ENCODE measurements at regions of chr12 and their contacts with region 1.

Region 1: GRCh38 chr12:6867413-6868210 is at the start of gene TPI1:
- DNase-seq: peak; percentile 46 to 82
- H3K4me3 ChIP-seq: peak within 1 kb of the TSS; percentile 97
- H3K27ac ChIP-seq: peak within 1 kb of the TSS; percentile 72
- H3K4me1 ChIP-seq: peaks cover 32% of the 10 kb centered on the region
- H3K27me3 ChIP-seq: no peaks in the 10 kb centered on the region
- CTCF ChIP-seq: no peak; the same call in 1 of the 2 replicates
- total RNA-seq, gene TPI1: 1,080 and 1,199 TPM in 2 replicates

Region 2: GRCh38 chr12:6890789-6891645 is 23.4 kb after region 1 on chr12:
- CTCF ChIA-PET with region 1: interaction called, 13 read pairs
- POLR2A ChIA-PET with region 1: interaction called, 20 read pairs
- intact Hi-C with region 1: no loop called
- DNase-seq: peak; percentile 89 to 100
- H3K4me3 ChIP-seq: peak overlapping the region; percentile 57
- H3K27ac ChIP-seq: peak overlapping the region; percentile 90
- H3K4me1 ChIP-seq: peaks cover 15% of the 10 kb centered on the region
- H3K27me3 ChIP-seq: no peaks in the 10 kb centered on the region
- CTCF ChIP-seq: peak; percentile 74

Region 3: GRCh38 chr12:6927379-6928024 is 59.9 kb after region 1 on chr12 and contains the start of gene ATN1:
- CTCF ChIA-PET with region 1: interaction called, 15 read pairs
- POLR2A ChIA-PET with region 1: interaction called, 14 read pairs
- intact Hi-C with region 1: loop called (anchors 2 kb)
- DNase-seq: peak in 1 of 2 experiments; percentile 66
- H3K4me3 ChIP-seq: peak within 1 kb of the TSS; percentile 85
- H3K27ac ChIP-seq: peak within 1 kb of the TSS; percentile 75
- H3K4me1 ChIP-seq: peaks cover 53% of the 10 kb centered on the region
- H3K27me3 ChIP-seq: no peaks in the 10 kb centered on the region
- CTCF ChIP-seq: no peak
- total RNA-seq, gene ATN1: 158 and 159 TPM in 2 replicates

Region 4: DNA sequence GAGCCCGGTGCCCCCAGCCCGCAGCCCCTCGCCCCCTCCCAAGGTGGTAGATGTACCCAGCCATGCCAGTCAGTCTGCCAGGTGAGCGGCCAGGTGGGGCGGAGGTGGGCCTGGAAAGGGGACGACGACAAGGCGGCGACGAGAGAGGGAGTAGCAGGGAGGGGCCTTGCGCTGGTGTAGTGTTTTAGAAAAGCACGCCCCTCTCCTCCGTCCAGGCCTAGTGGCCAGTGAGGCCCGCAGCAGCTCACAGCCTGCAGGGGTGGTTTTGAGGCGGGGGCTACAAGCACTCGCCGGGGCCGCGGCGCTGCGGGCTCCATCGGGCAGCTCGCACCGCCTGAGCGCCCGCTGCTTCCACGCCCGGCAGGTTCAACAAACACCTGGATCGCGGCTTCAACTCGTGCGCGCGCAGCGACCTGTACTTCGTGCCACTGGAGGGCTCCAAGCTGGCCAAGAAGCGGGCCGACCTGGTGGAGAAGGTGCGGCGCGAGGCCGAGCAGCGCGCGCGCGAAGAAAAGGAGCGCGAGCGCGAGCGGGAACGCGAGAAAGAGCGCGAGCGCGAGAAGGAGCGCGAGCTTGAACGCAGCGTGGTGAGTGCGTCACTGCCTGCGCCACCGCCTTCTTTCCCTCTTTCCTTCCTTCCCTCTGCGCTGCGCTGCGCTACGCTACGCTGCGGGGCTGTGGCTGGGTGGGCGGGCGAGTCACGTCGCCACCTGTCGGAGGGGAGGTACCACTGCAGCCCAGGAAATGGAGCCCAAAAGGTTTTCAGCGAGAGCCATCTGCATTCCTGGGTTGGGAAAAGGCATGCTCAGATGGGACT is 70.1 kb after region 1 on chr12:
- CTCF ChIA-PET with region 1: interaction called, 5 read pairs
- POLR2A ChIA-PET with region 1: interaction called, 6 read pairs
- intact Hi-C with region 1: loop called (anchors 1 kb)
- DNase-seq: peak; percentile 92 to 97
- H3K4me3 ChIP-seq: peak overlapping the region; percentile 62
- H3K27ac ChIP-seq: peak overlapping the region; percentile 52
- H3K4me1 ChIP-seq: peaks cover 8% of the 10 kb centered on the region
- H3K27me3 ChIP-seq: no peaks in the 10 kb centered on the region
- CTCF ChIP-seq: peak; percentile 98

Region 5: DNA sequence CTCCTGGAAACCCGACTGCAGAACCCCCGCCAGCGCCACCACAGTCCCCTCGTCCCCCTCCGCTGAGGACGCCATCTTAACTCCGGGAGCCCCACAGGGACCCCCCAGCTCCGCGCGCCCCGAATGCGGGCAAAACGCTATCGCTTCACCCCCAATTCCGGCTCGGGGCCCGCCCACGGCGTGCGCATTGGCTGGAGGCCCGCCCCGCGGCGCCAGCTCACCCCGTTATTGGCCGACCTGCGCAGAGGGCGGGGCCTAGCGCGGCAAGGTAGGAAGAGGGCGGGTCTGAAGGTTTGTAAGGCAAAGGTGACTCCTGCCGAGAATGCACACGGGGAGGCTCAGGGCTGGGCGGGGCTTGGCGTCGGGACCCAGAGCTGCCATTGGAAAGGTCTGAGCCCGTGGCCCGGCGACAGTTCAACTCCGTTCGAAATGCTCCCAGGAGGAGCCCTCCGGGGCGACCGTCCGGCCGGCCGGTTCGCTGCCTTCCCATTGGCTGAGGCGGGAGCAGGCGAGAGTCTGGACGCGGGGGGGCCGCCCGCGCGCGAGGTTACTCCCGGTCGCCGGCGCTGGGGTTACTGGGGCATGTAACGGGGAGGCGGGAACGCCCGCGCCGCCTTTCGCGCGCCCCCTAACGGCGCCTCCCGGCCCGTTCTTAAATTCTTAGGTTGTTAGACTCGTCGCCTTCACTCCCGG is 150.9 kb after region 1 on chr12 and contains the start of gene LPCAT3:
- CTCF ChIA-PET with region 1: no interaction called
- POLR2A ChIA-PET with region 1: interaction called, 4 read pairs
- intact Hi-C with region 1: loop called (anchors 2 kb)
- DNase-seq: peak; percentile 96 to 100
- H3K4me3 ChIP-seq: peak within 1 kb of the TSS; percentile 79
- H3K27ac ChIP-seq: peak within 1 kb of the TSS; percentile 74
- H3K4me1 ChIP-seq: peaks cover 37% of the 10 kb centered on the region
- H3K27me3 ChIP-seq: no peaks in the 10 kb centered on the region
- CTCF ChIP-seq: peak; percentile 83
- total RNA-seq, gene LPCAT3: 53.8 and 102 TPM in 2 replicates

Region 6: GRCh38 chr12:7108796-7109571 is 241.4 kb after region 1 on chr12 and contains the start of gene C1RL:
- CTCF ChIA-PET with region 1: interaction called, 3 read pairs
- POLR2A ChIA-PET with region 1: interaction called, 7 read pairs
- intact Hi-C with region 1: loop called (anchors 1 kb)
- DNase-seq: peak; percentile 72 to 91
- H3K4me3 ChIP-seq: peak within 1 kb of the TSS; percentile 79
- H3K27ac ChIP-seq: peak within 1 kb of the TSS; percentile 76
- H3K4me1 ChIP-seq: peaks cover 28% of the 10 kb centered on the region
- H3K27me3 ChIP-seq: no peaks in the 10 kb centered on the region
- CTCF ChIP-seq: peak; percentile 97
- total RNA-seq, gene C1RL: 70.4 and 72.9 TPM in 2 replicates